Activated CD4-positive, alpha-beta T cell treated with anti-CD3 and anti-CD28 coated beads for 36 hours (primary cell): ENCODE measurements at regions of chr2 and their contacts with region 1.

Region 1: DNA sequence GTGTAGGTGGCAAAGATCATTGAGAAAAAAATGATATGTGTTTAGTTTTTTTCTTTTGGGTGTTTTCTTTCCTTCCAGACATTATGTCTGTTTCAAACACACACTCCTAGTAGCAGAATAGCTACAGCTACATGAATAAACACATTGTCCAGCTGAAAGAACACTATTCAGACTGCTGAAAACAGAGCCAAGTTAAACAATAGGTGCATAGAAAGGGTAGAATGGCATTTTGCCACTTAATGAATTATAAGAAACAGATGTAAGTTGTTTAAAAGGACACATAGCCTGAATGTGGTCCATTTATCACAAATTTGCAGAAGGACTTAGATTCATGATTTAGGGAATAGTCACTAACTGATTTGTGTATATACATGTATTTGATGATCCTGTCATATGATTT is 20.1 kb downstream of the CTLA4 start:
- DNase-seq: no peak
- ATAC-seq: no peak
- H3K4me3 Mint-ChIP-seq: no peak overlapping the region
- H3K27ac Mint-ChIP-seq: peak overlapping the region; percentile 68
- H3K4me1 Mint-ChIP-seq: peaks cover 67% of the 10 kb centered on the region
- H3K27me3 Mint-ChIP-seq: peaks cover 4% of the 10 kb centered on the region

Region 2: DNA sequence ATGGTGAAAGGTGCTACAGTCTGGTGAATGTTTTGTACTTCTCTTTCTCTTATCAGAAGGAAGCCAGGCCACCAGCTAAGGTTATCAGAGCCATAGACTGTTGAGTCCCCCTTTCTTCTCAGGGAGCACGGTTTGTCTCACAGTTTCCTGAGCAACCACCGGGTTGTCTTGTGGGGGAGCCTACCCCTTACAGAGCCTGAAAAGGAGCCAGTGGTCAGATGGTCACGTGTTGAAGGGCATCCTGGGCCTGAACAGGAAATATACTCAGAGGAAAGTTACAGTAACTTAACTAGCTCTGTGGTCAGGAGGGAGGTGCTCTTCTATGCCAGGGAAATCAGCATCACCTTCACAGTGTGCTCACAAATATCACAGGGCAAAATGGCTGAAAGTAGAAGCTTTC is 169.6 kb before region 1 on chr2:
- CTCF ChIA-PET with region 1: no interaction called
- POLR2A ChIA-PET with region 1: no interaction called
- intact Hi-C with region 1: no loop called
- DNase-seq: peak; percentile 77
- ATAC-seq: peak; percentile 63
- H3K4me3 Mint-ChIP-seq: peak overlapping the region; percentile 63
- H3K27ac Mint-ChIP-seq: peak overlapping the region; percentile 95
- H3K4me1 Mint-ChIP-seq: peaks cover 97% of the 10 kb centered on the region
- H3K27me3 Mint-ChIP-seq: no peaks in the 10 kb centered on the region

Region 3: GRCh38 chr2:203852760-203853159 is 34.9 kb before region 1 on chr2:
- CTCF ChIA-PET with region 1: interaction called, 6 read pairs
- POLR2A ChIA-PET with region 1: no interaction called
- intact Hi-C with region 1: loop called (anchors 1 kb)
- DNase-seq: no peak
- ATAC-seq: peak; percentile 53
- H3K4me3 Mint-ChIP-seq: peak overlapping the region; percentile 29
- H3K27ac Mint-ChIP-seq: peak overlapping the region; percentile 83
- H3K4me1 Mint-ChIP-seq: peaks cover 65% of the 10 kb centered on the region
- H3K27me3 Mint-ChIP-seq: no peaks in the 10 kb centered on the region

Region 4: GRCh38 chr2:203858176-203858575 is 29.5 kb before region 1 on chr2:
- CTCF ChIA-PET with region 1: interaction called, 6 read pairs
- POLR2A ChIA-PET with region 1: interaction called, 4 read pairs
- intact Hi-C with region 1: loop called in 1 of 2 experiments (anchors 1 kb)
- DNase-seq: peak; percentile 62
- ATAC-seq: peak; percentile 57
- H3K4me3 Mint-ChIP-seq: peak overlapping the region; percentile 15
- H3K27ac Mint-ChIP-seq: peak overlapping the region; percentile 66
- H3K4me1 Mint-ChIP-seq: peaks cover 85% of the 10 kb centered on the region
- H3K27me3 Mint-ChIP-seq: no peaks in the 10 kb centered on the region

Region 5: GRCh38 chr2:204089574-204089973 is 201.9 kb after region 1 on chr2:
- CTCF ChIA-PET with region 1: no interaction called
- POLR2A ChIA-PET with region 1: no interaction called
- intact Hi-C with region 1: no loop called
- DNase-seq: no peak
- ATAC-seq: no peak
- H3K4me3 Mint-ChIP-seq: no peak overlapping the region
- H3K27ac Mint-ChIP-seq: no peak overlapping the region
- H3K4me1 Mint-ChIP-seq: no peaks in the 10 kb centered on the region
- H3K27me3 Mint-ChIP-seq: peaks cover 3% of the 10 kb centered on the region